ENCODE measurements at regions of chr2 and their contacts with region 1.

Region 1: GRCh38 chr2:126913881-126914615 is 15.4 kb downstream of the TEX51 start:
- DNase-seq: no peak
- ATAC-seq: no peak
- H3K4me3 Mint-ChIP-seq: no peak overlapping the region
- H3K27ac Mint-ChIP-seq: no peak overlapping the region
- H3K4me1 Mint-ChIP-seq: no peaks in the 10 kb centered on the region
- H3K27me3 Mint-ChIP-seq: peaks cover 8% of the 10 kb centered on the region

Region 2: GRCh38 chr2:126543081-126543480 is 371.0 kb before region 1 on chr2:
- CTCF ChIA-PET with region 1: no interaction called
- POLR2A ChIA-PET with region 1: no interaction called
- intact Hi-C with region 1: no loop called
- DNase-seq: no peak
- ATAC-seq: no peak
- H3K4me3 Mint-ChIP-seq: no peak overlapping the region
- H3K27ac Mint-ChIP-seq: no peak overlapping the region
- H3K4me1 Mint-ChIP-seq: no peaks in the 10 kb centered on the region
- H3K27me3 Mint-ChIP-seq: no peaks in the 10 kb centered on the region

Region 3: DNA sequence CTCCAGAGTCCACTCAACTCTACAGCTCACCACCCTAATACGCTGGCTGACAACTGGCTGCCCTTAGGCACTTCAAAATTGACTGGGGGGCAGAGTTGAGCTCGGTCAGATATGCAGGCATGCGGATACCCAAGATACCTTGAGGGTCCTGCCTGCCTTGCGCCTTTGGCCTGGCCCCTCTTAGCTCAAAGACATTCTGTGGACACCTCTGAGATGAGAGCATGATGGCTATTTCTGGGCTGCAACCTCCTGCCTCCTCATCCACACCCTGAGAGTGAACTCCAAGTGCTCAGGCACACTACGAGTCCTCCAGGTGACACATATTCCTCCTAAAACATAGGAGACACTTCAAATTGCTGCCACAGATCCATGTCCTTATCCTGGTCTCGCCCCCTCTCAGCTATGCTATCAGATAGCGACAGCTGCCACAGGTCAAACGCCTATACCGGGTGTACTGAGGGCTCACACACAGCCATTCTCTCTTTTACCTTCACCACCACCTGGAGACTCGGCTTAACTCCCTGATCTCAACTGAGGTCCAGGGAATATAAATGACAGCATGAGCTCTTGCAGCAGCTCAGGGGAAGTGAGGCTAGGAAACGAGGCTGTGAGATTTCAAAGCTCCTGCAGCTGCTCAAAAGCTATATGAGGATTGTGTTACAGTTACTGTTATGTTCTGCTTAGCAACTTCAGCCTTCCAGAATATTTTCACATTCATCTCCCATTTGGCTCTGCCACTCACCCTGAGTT is 75.9 kb before region 1 on chr2:
- CTCF ChIA-PET with region 1: no interaction called
- POLR2A ChIA-PET with region 1: no interaction called
- intact Hi-C with region 1: no loop called
- DNase-seq: no peak
- ATAC-seq: no peak
- H3K4me3 Mint-ChIP-seq: no peak overlapping the region
- H3K27ac Mint-ChIP-seq: no peak overlapping the region
- H3K4me1 Mint-ChIP-seq: no peaks in the 10 kb centered on the region
- H3K27me3 Mint-ChIP-seq: peaks cover 8% of the 10 kb centered on the region

Region 4: DNA sequence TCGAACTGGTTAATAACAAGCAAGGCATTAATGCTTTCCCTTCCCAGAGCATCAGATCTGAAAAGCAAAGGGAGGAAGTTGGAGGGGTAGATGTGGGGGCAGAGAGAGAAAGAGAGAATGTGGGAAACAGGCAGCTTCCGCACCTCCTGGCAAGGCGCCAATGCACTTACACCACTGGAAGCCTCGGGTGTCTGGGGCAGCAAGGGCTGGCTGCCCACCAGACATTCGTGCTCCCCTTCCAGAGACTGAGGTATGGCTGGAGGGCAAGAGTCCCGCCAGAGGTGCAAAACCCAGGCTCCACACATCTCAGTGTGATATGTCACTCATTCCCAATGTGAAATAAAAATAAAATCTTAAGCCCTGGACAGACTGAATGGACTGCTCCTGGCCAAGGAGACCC is 31.1 kb after region 1 on chr2:
- CTCF ChIA-PET with region 1: no interaction called
- POLR2A ChIA-PET with region 1: no interaction called
- intact Hi-C with region 1: no loop called
- DNase-seq: no peak
- ATAC-seq: no peak
- H3K4me3 Mint-ChIP-seq: no peak overlapping the region
- H3K27ac Mint-ChIP-seq: no peak overlapping the region
- H3K4me1 Mint-ChIP-seq: no peaks in the 10 kb centered on the region
- H3K27me3 Mint-ChIP-seq: peaks cover 17% of the 10 kb centered on the region

Region 5: GRCh38 chr2:126990200-126990599 is 76.2 kb after region 1 on chr2:
- CTCF ChIA-PET with region 1: no interaction called
- POLR2A ChIA-PET with region 1: no interaction called
- intact Hi-C with region 1: loop called in 1 of 2 experiments (anchors 2 kb)
- DNase-seq: no peak
- ATAC-seq: no peak
- H3K4me3 Mint-ChIP-seq: no peak overlapping the region
- H3K27ac Mint-ChIP-seq: no peak overlapping the region
- H3K4me1 Mint-ChIP-seq: no peaks in the 10 kb centered on the region
- H3K27me3 Mint-ChIP-seq: peaks cover 28% of the 10 kb centered on the region

Measured in activated CD4-positive, alpha-beta T cell treated with anti-CD3 and anti-CD28 coated beads for 36 hours (primary cell).